WTC11 (cell line): ENCODE measurements at regions of chr19 and their contacts with region 1.

Region 1: GRCh38 chr19:35509861-35510625 is 3.4 kb downstream of the DMKN start:
- DNase-seq: peak; percentile 97
- ATAC-seq: peak; percentile 85
- H3K4me3 Mint-ChIP-seq: peak overlapping the region; percentile 99
- H3K27ac Mint-ChIP-seq: peak overlapping the region; percentile 97
- H3K4me1 Mint-ChIP-seq: peaks cover 24% of the 10 kb centered on the region
- H3K27me3 Mint-ChIP-seq: peaks cover 20% of the 10 kb centered on the region
- CTCF ChIP-seq: peak; percentile 98

Region 2: GRCh38 chr19:35484252-35485036 is 25.6 kb before region 1 on chr19:
- CTCF ChIA-PET with region 1: interaction called, 11 read pairs
- POLR2A ChIA-PET with region 1: no interaction called
- DNase-seq: no peak
- ATAC-seq: no peak
- H3K4me3 Mint-ChIP-seq: no peak overlapping the region
- H3K27ac Mint-ChIP-seq: no peak overlapping the region
- H3K4me1 Mint-ChIP-seq: no peaks in the 10 kb centered on the region
- H3K27me3 Mint-ChIP-seq: peaks cover 14% of the 10 kb centered on the region
- CTCF ChIP-seq: no peak

Region 3: GRCh38 chr19:35521124-35521743 is 11.2 kb after region 1 on chr19:
- CTCF ChIA-PET with region 1: interaction called, 18 read pairs
- POLR2A ChIA-PET with region 1: interaction called, 4 read pairs
- DNase-seq: no peak
- ATAC-seq: peak; percentile 43
- H3K4me3 Mint-ChIP-seq: no peak overlapping the region
- H3K27ac Mint-ChIP-seq: peak overlapping the region; percentile 76; the same call in 1 of the 2 replicates
- H3K4me1 Mint-ChIP-seq: peaks cover 39% of the 10 kb centered on the region
- H3K27me3 Mint-ChIP-seq: no peaks in the 10 kb centered on the region; the same call in 1 of the 2 replicates
- CTCF ChIP-seq: no peak

Region 4: DNA sequence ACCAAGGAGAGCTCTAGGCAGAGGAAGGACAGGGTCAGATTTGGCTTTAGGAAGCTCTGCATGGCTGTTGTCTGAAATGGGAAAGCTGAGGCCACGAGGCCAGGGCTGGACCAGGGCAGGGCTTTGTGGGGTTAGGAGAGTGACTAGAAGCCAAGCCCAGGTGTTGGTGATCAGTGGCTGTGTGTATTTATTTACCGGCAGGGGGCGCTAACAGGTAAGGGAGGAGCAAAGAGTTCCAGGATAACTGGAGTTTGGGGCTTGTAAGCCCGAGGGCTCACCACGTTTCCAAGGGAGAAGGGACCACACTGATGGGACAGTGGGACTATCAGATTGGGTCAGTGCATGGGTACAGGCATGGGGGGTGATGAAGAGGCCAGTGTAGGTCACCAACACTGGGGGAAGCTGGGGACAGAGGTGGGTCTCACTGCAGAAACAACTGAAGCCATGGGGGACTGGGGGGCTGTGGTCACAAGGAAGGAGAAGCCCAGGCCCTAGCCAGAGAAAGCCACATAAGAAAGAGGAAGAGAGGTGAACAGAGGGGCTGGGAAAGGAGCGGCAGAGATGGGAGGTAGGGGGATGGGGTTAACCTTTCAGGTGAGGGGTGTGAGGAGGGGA is 39.2 kb after region 1 on chr19:
- CTCF ChIA-PET with region 1: interaction called, 23 read pairs
- POLR2A ChIA-PET with region 1: interaction called, 4 read pairs
- DNase-seq: peak; percentile 69
- ATAC-seq: peak; percentile 70
- H3K4me3 Mint-ChIP-seq: no peak overlapping the region
- H3K27ac Mint-ChIP-seq: peak overlapping the region; percentile 38
- H3K4me1 Mint-ChIP-seq: peaks cover 18% of the 10 kb centered on the region
- H3K27me3 Mint-ChIP-seq: no peaks in the 10 kb centered on the region; the same call in 1 of the 2 replicates
- CTCF ChIP-seq: peak; percentile 68

Region 5: DNA sequence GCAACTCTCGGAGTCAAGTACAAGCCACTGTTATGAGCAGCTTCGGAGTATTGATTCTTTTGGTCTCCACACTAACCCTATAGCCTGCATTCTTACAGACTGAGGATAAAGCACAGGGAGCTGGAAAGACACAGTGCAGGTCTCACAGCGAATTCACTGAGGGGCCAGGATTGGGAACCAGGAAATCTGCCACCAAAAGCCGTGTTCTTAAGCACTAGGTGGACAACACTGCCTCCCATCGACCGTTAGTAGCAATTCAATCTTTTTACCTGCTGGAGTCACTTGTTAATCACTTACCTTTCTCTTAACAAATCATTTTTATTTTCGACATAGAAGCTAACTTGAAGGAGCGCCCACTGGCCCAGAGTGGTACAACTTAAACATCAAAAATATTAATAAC is 82.2 kb after region 1 on chr19:
- CTCF ChIA-PET with region 1: interaction called, 26 read pairs
- POLR2A ChIA-PET with region 1: interaction called, 4 read pairs
- DNase-seq: peak; percentile 40
- ATAC-seq: peak; percentile 78
- H3K4me3 Mint-ChIP-seq: no peak overlapping the region
- H3K27ac Mint-ChIP-seq: no peak overlapping the region; the same call in 1 of the 2 replicates
- H3K4me1 Mint-ChIP-seq: no peaks in the 10 kb centered on the region
- H3K27me3 Mint-ChIP-seq: peaks cover 19% of the 10 kb centered on the region
- CTCF ChIP-seq: peak; percentile 43; the same call in 1 of the 2 replicates

Region 6: GRCh38 chr19:35644206-35644986 is 134.4 kb after region 1 on chr19:
- CTCF ChIA-PET with region 1: interaction called, 16 read pairs
- POLR2A ChIA-PET with region 1: interaction called, 4 read pairs
- DNase-seq: peak; percentile 98
- ATAC-seq: peak; percentile 83
- H3K4me3 Mint-ChIP-seq: peak overlapping the region; percentile 84
- H3K27ac Mint-ChIP-seq: peak overlapping the region; percentile 93
- H3K4me1 Mint-ChIP-seq: peaks cover 29% of the 10 kb centered on the region
- H3K27me3 Mint-ChIP-seq: peaks cover 17% of the 10 kb centered on the region
- CTCF ChIP-seq: no peak